ENCODE measurements at regions of chr4 and their contacts with region 1.

Region 1: DNA sequence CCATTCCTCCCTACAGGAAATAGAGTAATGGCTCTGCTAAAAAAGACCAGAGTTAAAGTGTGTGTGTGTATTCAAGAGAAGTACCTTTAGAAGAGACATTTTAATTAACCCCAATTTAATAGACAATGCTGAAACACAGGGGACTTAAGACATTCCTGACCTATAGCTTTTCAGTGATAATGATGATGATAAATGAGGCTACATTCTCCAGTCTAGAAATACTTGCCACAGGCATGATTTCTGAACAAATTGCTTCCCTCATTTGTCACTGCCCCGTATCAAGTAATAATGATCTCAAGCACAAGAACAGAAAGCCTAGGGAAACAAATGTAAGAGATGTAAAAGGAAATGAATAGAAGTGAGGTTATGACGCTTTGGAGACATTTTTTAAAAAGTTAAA is 117.1 kb downstream of the UNC5C start:
- DNase-seq: no peak
- H3K4me3 ChIP-seq: no peak overlapping the region
- H3K27ac ChIP-seq: no peak overlapping the region
- H3K4me1 ChIP-seq: no peaks in the 10 kb centered on the region
- H3K27me3 ChIP-seq: no peaks in the 10 kb centered on the region
- CTCF ChIP-seq: no peak
- EP300 ChIP-seq: no peak
- POLR2A ChIP-seq: no peak

Region 2: GRCh38 chr4:95114521-95114920 is 317.2 kb before region 1 on chr4:
- in situ Hi-C with region 1: no loop called
- intact Hi-C with region 1: no loop called
- DNase-seq: no peak
- H3K4me3 ChIP-seq: no peak overlapping the region
- H3K27ac ChIP-seq: no peak overlapping the region
- H3K4me1 ChIP-seq: no peaks in the 10 kb centered on the region
- H3K27me3 ChIP-seq: no peaks in the 10 kb centered on the region
- CTCF ChIP-seq: no peak
- EP300 ChIP-seq: no peak
- POLR2A ChIP-seq: no peak

Region 3: GRCh38 chr4:95472534-95472933 is 40.9 kb after region 1 on chr4:
- in situ Hi-C with region 1: no loop called
- intact Hi-C with region 1: no loop called
- DNase-seq: no peak
- H3K4me3 ChIP-seq: no peak overlapping the region
- H3K27ac ChIP-seq: no peak overlapping the region
- H3K4me1 ChIP-seq: no peaks in the 10 kb centered on the region
- H3K27me3 ChIP-seq: no peaks in the 10 kb centered on the region
- CTCF ChIP-seq: no peak
- EP300 ChIP-seq: no peak
- POLR2A ChIP-seq: no peak

Region 4: DNA sequence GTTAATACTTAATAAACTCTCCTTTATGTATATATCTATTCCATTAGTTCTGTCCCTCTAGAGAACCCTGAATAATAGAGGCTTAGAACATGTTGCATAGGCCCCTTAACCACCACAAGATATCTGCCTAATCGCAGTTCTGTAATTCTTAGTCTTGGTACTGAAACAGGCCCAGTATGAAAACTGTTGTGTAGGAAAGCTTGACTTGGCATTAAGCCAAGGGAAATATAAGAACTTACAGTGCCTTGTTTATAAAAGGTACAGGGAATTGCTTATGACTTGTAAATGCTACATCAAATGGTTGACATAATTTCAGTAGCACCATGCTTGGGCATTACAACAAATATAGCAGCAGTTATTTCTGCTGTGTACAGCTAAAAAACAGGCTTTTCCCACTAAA is 1499.2 kb after region 1 on chr4:
- in situ Hi-C with region 1: no loop called
- intact Hi-C with region 1: loop called (anchors 5 kb)
- DNase-seq: no peak
- H3K4me3 ChIP-seq: no peak overlapping the region
- H3K27ac ChIP-seq: no peak overlapping the region
- H3K4me1 ChIP-seq: no peaks in the 10 kb centered on the region
- H3K27me3 ChIP-seq: no peaks in the 10 kb centered on the region
- CTCF ChIP-seq: no peak
- EP300 ChIP-seq: no peak
- POLR2A ChIP-seq: no peak

Measured in transverse colon (tissue), 4 donors.